Activated CD8-positive, alpha-beta memory T cell treated with anti-CD3 and anti-CD28 coated beads, Interleukin-2, amount 10 ng/mL, durations not matched to agents 7 days and 5 days (primary cell): ENCODE measurements at regions of chr14 and their contacts with region 1.

Region 1: DNA sequence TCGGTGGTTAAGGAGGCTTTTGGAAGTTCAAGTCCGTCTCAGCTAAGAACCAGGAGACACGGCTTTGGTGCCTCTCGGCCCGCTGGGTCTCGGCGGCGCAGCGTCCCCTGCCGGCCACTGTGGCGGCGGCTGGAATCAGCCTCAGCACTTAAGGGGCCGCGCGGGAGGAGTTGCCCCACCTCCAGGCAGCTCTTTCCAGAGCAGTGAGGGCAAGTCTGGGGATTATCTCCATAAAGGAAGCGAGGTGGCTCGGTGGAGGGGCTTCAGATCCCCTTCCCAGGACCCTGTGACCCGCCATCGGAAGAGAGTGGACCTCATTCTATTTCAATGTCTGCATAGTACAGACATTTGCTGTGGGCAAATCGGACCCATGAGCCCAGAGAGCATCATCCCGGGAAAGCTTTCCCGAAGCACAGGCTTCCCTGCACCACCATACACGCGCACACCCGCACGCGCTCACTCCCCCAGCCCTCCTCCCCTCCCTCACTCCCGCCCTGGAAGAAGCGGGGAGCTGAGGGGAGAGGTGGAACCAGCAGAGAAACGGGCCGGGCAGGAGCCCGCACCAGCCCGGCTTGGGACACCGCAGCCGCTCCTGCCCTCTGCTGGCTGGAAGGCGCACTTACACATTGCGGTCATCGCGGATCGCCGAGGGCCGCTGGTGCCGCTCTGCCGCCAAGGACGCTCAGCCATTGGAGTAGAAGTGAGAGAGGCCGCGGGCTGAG is 15.9 kb downstream of the RNASE2 start:
- DNase-seq: peak; percentile 84
- ATAC-seq: peak; percentile 90
- H3K4me3 Mint-ChIP-seq: peak overlapping the region; percentile 83
- H3K27ac Mint-ChIP-seq: peak overlapping the region; percentile 22
- H3K4me1 Mint-ChIP-seq: peaks cover 12% of the 10 kb centered on the region
- H3K27me3 Mint-ChIP-seq: peaks cover 51% of the 10 kb centered on the region

Region 2: DNA sequence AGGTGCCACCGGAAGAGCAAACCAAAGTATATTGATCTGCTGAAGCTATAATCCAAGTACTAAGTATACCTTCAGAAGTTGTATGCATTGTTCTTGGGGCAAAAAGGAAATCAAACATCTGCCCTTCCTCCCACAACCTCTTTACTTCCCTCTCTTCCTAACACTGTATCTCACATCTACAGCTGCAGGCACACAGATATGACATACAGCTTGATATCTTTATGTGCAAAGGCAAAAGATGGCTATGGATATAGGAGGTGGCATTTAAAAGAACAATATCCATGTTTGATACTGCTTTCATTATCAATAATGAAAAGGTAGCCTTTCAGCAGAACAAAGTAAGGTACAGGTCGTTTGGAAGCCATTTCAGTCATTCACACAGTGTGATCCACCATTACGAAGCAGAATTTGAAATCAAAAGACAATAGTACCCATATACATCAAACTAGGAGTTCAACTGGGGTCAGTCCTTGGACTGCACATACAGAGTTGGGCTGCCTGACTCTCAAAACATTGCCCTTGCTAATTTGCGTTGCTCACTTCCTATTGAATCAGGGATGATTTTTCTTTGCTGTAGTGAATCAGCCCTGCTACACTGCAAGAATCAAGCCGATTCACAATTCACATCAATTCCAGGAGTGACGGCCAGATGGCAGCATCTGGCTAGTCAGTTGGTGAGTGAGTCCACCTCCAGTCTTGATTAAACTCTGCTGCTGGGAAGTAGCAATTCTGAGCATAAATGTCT is 273.7 kb before region 1 on chr14:
- CTCF ChIA-PET with region 1: interaction called, 19 read pairs
- DNase-seq: peak; percentile 76
- ATAC-seq: peak; percentile 76
- H3K4me3 Mint-ChIP-seq: no peak overlapping the region
- H3K27ac Mint-ChIP-seq: no peak overlapping the region
- H3K4me1 Mint-ChIP-seq: peaks cover 19% of the 10 kb centered on the region
- H3K27me3 Mint-ChIP-seq: peaks cover 2% of the 10 kb centered on the region

Region 3: DNA sequence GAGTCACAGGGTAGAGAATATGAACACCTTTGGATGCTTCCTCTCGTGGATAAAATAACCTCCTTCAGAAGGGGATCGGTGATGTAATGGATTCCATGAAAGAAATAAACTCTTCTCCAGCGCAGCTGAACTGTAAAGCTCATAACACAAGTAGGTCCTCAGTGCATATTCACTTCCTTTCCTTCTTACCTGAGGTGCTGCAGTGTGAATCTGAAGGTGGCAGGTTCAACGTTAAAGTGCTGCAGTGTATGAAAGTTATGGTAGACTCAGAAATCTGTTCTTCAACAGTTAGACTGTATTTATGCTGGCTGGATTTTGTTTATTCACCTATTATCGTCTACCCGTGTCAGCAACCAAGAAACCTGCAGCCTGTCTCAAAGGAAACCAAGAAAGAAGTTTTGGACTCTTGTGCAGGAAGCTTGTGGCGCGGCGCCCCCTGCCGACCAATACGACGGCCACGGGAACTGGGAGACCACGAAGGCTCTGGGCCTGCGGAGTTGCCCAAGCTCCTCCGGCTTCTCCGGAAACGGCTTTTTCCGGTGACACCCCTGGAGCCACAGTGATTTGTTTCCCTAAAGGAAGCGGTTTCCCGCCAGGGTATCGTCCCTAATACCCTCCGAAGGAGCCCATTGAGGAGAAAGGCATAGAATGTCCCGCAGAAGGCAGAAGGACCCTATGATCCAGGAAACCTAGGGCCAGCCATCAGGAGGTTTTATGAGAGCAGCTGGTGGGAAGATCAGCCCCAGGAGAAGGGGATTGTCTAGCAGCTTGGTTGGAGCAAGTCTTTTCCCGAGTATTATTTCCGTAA is 97.6 kb before region 1 on chr14:
- CTCF ChIA-PET with region 1: interaction called, 21 read pairs
- DNase-seq: peak; percentile 86
- ATAC-seq: peak; percentile 90
- H3K4me3 Mint-ChIP-seq: peak overlapping the region; percentile 8
- H3K27ac Mint-ChIP-seq: no peak overlapping the region
- H3K4me1 Mint-ChIP-seq: peaks cover 16% of the 10 kb centered on the region
- H3K27me3 Mint-ChIP-seq: peaks cover 38% of the 10 kb centered on the region

Region 4: GRCh38 chr14:20982646-20983369 is 11.7 kb after region 1 on chr14:
- CTCF ChIA-PET with region 1: interaction called, 27 read pairs
- DNase-seq: no peak
- ATAC-seq: no peak
- H3K4me3 Mint-ChIP-seq: no peak overlapping the region
- H3K27ac Mint-ChIP-seq: no peak overlapping the region
- H3K4me1 Mint-ChIP-seq: peaks cover 4% of the 10 kb centered on the region
- H3K27me3 Mint-ChIP-seq: peaks cover 17% of the 10 kb centered on the region

Region 5: DNA sequence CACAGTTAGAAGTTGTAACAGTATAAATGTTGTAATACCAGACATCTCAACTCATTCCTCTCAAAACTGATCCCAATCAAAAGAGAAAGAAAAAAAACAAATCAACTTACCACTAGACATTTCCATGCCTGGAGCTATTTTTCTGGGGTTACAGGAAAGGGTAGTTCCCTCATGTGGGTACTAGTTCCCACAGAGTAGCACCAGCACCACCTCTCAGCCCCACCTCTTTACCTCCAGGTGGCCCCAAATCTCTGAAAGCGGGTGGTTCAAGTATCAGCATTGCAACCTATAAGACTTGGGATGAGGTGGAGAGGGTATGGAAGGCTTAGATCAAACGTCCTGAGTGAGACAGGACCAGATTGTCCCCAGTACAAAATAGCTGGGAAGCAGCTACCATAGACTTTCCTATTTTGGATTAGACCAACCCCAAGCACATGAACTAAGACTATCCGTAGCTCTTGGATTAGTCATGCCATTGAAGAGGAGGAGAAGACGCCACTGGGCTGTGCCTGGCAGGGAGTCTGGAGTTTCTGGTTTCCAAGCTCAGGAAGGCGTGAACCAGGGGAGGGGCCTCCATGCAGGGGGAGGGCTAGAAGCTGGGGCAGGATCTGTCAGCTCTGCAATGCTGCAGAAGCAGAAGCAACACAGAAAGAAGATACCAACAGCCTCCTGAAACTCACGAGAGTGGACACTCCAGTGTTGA is 27.7 kb after region 1 on chr14 and contains the start of gene SLC39A2:
- CTCF ChIA-PET with region 1: interaction called, 15 read pairs
- DNase-seq: no peak
- ATAC-seq: no peak
- H3K4me3 Mint-ChIP-seq: no peak within 1 kb of the TSS
- H3K27ac Mint-ChIP-seq: no peak within 1 kb of the TSS
- H3K4me1 Mint-ChIP-seq: peaks cover 10% of the 10 kb centered on the region
- H3K27me3 Mint-ChIP-seq: no peaks in the 10 kb centered on the region
- total RNA-seq, gene SLC39A2: 0.16 to 0.44 TPM

Region 6: GRCh38 chr14:21356511-21356910 is 385.4 kb after region 1 on chr14:
- CTCF ChIA-PET with region 1: no interaction called
- DNase-seq: no peak
- ATAC-seq: no peak
- H3K4me3 Mint-ChIP-seq: no peak overlapping the region
- H3K27ac Mint-ChIP-seq: no peak overlapping the region
- H3K4me1 Mint-ChIP-seq: no peaks in the 10 kb centered on the region
- H3K27me3 Mint-ChIP-seq: no peaks in the 10 kb centered on the region